ENCODE measurements at regions of chr13 and their contacts with region 1.

Region 1: DNA sequence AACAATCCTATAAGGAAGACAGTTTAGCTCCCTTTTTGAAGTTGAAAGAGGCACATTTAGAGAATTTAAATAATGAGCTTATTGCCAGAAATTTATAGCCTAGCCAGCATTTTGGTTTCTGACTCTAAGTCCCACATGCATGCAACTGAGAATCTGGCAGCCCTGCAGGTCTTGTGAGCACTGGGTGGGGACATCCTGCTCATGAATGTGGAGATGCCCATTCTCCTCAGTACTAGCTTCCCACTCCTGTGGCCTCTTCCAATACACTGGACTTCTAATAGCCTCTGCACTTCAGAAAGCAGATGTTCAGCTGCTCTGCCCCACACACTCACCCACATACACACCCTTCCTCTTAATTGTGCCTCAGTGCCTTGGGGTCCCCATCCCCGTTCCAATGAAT is 80.2 kb upstream of the FREM2 start:
- DNase-seq: no peak
- H3K4me3 Mint-ChIP-seq: no peak overlapping the region
- H3K27ac Mint-ChIP-seq: no peak overlapping the region
- H3K4me1 Mint-ChIP-seq: no peaks in the 10 kb centered on the region
- H3K27me3 Mint-ChIP-seq: peaks cover 2% of the 10 kb centered on the region

Region 2: GRCh38 chr13:38308736-38309135 is 298.0 kb before region 1 on chr13:
- intact Hi-C with region 1: no loop called
- DNase-seq: no peak
- H3K4me3 Mint-ChIP-seq: no peak overlapping the region
- H3K27ac Mint-ChIP-seq: no peak overlapping the region
- H3K4me1 Mint-ChIP-seq: no peaks in the 10 kb centered on the region
- H3K27me3 Mint-ChIP-seq: no peaks in the 10 kb centered on the region

Region 3: DNA sequence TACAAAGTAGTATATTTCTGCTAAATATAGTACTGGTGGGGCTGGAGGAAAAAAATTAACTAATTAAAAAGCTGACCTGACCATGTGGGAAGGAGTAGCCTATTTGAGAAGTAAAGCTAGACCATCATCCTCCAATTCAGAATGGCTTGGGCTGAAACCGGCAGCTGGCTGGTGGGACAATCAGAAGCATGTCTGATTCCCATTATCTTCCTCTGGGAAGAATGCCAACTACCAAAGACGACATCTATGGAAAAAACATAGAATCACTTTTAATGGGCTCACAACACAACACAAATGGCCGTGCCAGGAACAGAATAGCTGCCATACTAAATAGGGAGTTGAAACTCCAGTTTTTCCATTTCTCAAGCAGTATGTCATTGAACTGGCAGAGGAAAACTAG is 40.2 kb before region 1 on chr13:
- intact Hi-C with region 1: no loop called
- DNase-seq: no peak
- H3K4me3 Mint-ChIP-seq: no peak overlapping the region
- H3K27ac Mint-ChIP-seq: no peak overlapping the region
- H3K4me1 Mint-ChIP-seq: no peaks in the 10 kb centered on the region
- H3K27me3 Mint-ChIP-seq: no peaks in the 10 kb centered on the region

Region 4: GRCh38 chr13:38617959-38618730 is 11.4 kb after region 1 on chr13:
- intact Hi-C with region 1: no loop called
- DNase-seq: no peak
- H3K4me3 Mint-ChIP-seq: no peak overlapping the region
- H3K27ac Mint-ChIP-seq: no peak overlapping the region
- H3K4me1 Mint-ChIP-seq: no peaks in the 10 kb centered on the region
- H3K27me3 Mint-ChIP-seq: no peaks in the 10 kb centered on the region

Region 5: DNA sequence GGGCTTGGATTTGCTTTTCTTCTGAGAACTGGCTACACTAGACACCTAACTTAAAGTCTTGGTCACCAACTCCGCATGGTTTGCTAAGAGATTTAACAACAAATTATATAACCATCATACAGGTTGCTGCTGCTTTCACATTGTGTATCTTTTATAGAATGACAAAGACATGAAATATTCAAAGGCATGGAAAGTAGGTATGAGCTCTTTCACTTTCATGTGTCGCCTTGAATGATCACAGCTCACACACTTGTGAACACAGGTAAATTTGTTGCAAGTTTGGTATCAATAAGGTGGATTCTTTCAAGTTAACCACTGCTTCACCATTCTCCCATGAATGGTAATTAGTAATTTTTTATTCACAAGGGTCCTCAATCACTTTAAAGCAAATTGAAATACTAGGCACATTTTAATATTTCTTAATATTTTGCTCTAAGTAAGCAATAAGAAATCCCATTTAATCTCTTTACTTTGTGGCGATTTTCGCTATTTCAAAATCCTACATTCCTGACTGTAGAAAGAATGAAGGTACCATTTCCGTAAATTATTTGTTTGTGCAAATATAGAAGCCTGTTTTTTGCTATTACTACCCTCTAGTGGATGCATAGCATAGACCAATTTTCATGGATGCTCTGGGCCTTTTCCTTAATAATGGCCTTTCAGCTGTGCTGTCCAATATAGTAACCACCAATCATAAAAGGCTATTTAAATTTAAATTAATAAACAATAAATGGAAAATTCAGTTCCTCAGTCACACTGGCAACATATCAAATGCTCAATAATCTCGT is 34.7 kb after region 1 on chr13:
- intact Hi-C with region 1: loop called (anchors 1 kb)
- DNase-seq: no peak
- H3K4me3 Mint-ChIP-seq: no peak overlapping the region
- H3K27ac Mint-ChIP-seq: no peak overlapping the region
- H3K4me1 Mint-ChIP-seq: no peaks in the 10 kb centered on the region
- H3K27me3 Mint-ChIP-seq: no peaks in the 10 kb centered on the region

Measured in activated T-helper 1 cell treated with anti-CD3 and anti-CD28 coated beads, Interleukin-12 subunit alpha, Interleukin-12 subunit beta, Interleukin-2, Interleukin-4 antibody, amounts not matched to agents 30 ng/mL and 10 ng/mL and 1 ng/mL, durations not matched to agents 14 hours and 24 hours and 36 hours (primary cell).